ENCODE measurements at regions of chr3 and their contacts with region 1.

Region 1: GRCh38 chr3:4850928-4851265 is 128.3 kb upstream of the BHLHE40 start:
- DNase-seq: peak; percentile 87
- H3K4me3 Mint-ChIP-seq: peak overlapping the region; percentile 72
- H3K27ac Mint-ChIP-seq: peak overlapping the region; percentile 99
- H3K4me1 Mint-ChIP-seq: peaks cover 77% of the 10 kb centered on the region
- H3K27me3 Mint-ChIP-seq: no peaks in the 10 kb centered on the region

Region 2: GRCh38 chr3:4387210-4388204 is 463.4 kb before region 1 on chr3:
- intact Hi-C with region 1: loop called (anchors 2 kb)
- DNase-seq: peak; percentile 48
- H3K4me3 Mint-ChIP-seq: peak overlapping the region; percentile 1
- H3K27ac Mint-ChIP-seq: peak overlapping the region; percentile 84
- H3K4me1 Mint-ChIP-seq: peaks cover 35% of the 10 kb centered on the region
- H3K27me3 Mint-ChIP-seq: no peaks in the 10 kb centered on the region

Region 3: DNA sequence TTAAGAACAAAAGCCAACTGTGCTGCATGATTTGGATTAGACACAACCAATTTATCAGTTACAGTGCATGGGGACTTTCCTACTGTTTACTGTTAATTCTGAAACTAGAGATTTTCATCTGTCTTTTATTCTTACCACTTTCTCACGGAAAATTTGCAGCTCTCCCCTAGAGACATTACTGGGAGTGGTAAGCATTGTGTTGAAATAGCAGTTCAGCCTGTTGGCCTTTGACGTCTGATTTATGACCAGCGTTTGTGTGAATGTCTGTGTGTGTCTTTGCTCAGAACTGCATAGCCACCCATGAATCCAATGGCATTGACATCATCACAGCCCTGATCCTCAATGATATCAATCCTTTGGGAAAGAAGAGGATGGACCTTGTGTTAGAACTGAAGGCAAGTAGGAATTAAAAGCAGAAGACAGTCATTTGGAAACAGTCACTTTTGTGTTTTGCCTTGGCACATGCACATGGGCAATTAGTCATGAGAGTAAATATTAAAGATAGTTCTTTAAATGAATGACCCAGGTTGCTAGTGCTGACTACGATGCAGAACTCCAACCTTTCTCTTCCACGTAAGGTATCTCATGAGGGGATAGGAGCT is 73.8 kb before region 1 on chr3:
- intact Hi-C with region 1: loop called (anchors 1 kb)
- DNase-seq: peak; percentile 80
- H3K4me3 Mint-ChIP-seq: peak overlapping the region; percentile 60
- H3K27ac Mint-ChIP-seq: peak overlapping the region; percentile 97
- H3K4me1 Mint-ChIP-seq: peaks cover 59% of the 10 kb centered on the region
- H3K27me3 Mint-ChIP-seq: no peaks in the 10 kb centered on the region

Region 4: GRCh38 chr3:4834403-4834866 is 16.5 kb before region 1 on chr3:
- intact Hi-C with region 1: loop called (anchors 1 kb)
- DNase-seq: peak; percentile 94
- H3K4me3 Mint-ChIP-seq: peak overlapping the region; percentile 81
- H3K27ac Mint-ChIP-seq: peak overlapping the region; percentile 97
- H3K4me1 Mint-ChIP-seq: peaks cover 83% of the 10 kb centered on the region
- H3K27me3 Mint-ChIP-seq: no peaks in the 10 kb centered on the region

Region 5: GRCh38 chr3:4906107-4906621 is 55.3 kb after region 1 on chr3:
- intact Hi-C with region 1: loop called (anchors 1 kb)
- DNase-seq: peak; percentile 71
- H3K4me3 Mint-ChIP-seq: peak overlapping the region; percentile 60
- H3K27ac Mint-ChIP-seq: peak overlapping the region; percentile 88
- H3K4me1 Mint-ChIP-seq: peaks cover 77% of the 10 kb centered on the region
- H3K27me3 Mint-ChIP-seq: no peaks in the 10 kb centered on the region

Region 6: DNA sequence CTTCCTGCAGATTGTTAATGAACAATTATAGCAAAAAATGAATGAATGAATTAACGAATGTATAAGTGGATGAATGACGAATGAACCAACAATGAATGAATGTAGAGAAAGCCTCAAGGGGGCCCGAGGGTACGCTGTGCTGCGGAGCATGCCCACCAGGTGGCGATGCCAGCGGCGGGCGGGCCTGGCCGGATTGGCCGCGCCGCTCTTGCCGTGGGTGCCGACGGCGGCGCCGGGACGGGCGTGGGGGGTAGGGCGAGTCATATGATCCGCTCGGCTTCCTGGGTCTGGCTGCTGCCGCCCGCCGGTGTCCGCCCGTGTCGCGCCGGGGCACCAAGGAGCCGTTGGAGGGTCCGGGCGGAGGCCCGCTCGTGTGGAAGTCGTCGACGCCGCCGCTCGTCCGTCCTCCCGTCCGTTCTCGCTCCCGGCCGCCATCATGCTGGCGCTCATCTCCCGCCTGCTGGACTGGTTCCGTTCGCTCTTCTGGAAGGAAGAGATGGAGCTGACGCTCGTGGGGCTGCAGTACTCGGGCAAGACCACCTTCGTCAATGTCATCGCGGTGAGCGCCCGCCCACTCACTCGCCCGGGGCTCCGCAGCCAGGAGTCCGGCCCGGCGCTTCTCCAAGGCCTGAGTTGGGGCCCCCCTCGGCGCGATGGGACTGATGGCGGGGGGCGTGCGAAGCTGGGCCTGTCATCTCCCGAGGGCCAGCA is 271.3 kb after region 1 on chr3 and contains the start of gene ARL8B:
- intact Hi-C with region 1: loop called (anchors 2 kb)
- DNase-seq: peak; percentile 98
- H3K4me3 Mint-ChIP-seq: peak within 1 kb of the TSS; percentile 85
- H3K27ac Mint-ChIP-seq: peak within 1 kb of the TSS; percentile 96
- H3K4me1 Mint-ChIP-seq: peaks cover 23% of the 10 kb centered on the region
- H3K27me3 Mint-ChIP-seq: no peaks in the 10 kb centered on the region
- total RNA-seq, gene ARL8B: 46.8 and 50.4 TPM in 2 replicates